ENCODE measurements at regions of chr20 and their contacts with region 1.

Region 1: GRCh38 chr20:645318-646106 is 7.5 kb downstream of the SRXN1 start:
- DNase-seq: peak; percentile 78 to 89
- H3K4me3 ChIP-seq: no peak overlapping the region
- H3K4me3 Mint-ChIP-seq: no peak overlapping the region
- H3K27ac Mint-ChIP-seq: no peak overlapping the region
- H3K4me1 ChIP-seq: no peaks in the 10 kb centered on the region
- H3K4me1 Mint-ChIP-seq: no peaks in the 10 kb centered on the region
- H3K27me3 ChIP-seq: no peaks in the 10 kb centered on the region
- H3K27me3 Mint-ChIP-seq: no peaks in the 10 kb centered on the region
- CTCF ChIP-seq: peak; percentile 95 to 97

Region 2: GRCh38 chr20:103456-103855 is 542.1 kb before region 1 on chr20:
- CTCF ChIA-PET with region 1: no interaction called
- POLR2A ChIA-PET with region 1: no interaction called
- intact Hi-C with region 1: no loop called
- DNase-seq: no peak
- H3K4me3 ChIP-seq: no peak overlapping the region
- H3K4me3 Mint-ChIP-seq: no peak overlapping the region
- H3K27ac Mint-ChIP-seq: no peak overlapping the region
- H3K4me1 ChIP-seq: no peaks in the 10 kb centered on the region
- H3K4me1 Mint-ChIP-seq: no peaks in the 10 kb centered on the region
- H3K27me3 ChIP-seq: peaks cover 1% of the 10 kb centered on the region; the same call in 1 of the 2 replicates
- H3K27me3 Mint-ChIP-seq: peaks cover 16% of the 10 kb centered on the region
- CTCF ChIP-seq: no peak

Region 3: DNA sequence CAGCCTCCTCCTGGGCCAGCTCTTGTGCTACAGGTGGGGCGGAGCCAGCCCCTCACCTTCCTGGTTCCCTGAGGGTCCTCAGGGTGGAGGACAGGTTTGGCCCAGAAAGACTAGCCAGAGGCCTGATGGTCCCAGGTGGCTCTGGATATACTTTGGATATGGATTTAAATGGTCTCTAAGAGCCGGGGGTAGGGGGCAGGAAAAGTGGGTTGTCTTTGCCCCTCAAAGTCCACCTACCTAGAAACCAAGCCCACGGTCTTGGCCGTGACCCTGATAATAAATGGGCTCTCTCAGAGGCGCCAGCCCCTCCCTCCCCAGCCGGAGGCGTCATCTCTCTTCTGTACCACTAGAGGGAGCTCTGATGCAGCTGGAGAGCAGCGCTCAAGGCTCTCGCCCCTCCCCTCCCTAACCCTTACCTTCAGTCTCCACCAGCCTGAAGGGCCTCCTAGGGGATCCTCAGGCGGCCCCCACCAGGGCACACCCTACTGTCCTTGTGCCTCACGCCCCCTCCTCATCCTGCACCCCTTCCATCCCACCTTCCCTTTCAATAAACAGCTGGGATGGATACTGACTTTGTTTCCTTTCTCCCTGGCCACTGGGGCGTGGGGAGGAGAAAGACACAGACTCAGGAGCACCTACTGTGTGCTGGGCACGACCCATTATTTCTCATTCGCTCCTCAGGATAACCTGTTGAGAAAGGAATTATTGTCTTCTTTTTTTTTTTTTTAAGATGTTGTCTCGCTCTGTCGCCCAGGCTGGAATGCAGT is 291.0 kb before region 1 on chr20:
- CTCF ChIA-PET with region 1: no interaction called
- POLR2A ChIA-PET with region 1: no interaction called
- intact Hi-C with region 1: loop called (anchors 5 kb)
- DNase-seq: peak; percentile 82 to 89
- H3K4me3 ChIP-seq: no peak overlapping the region
- H3K4me3 Mint-ChIP-seq: no peak overlapping the region
- H3K27ac Mint-ChIP-seq: peak overlapping the region; percentile 63
- H3K4me1 ChIP-seq: peaks cover 26% of the 10 kb centered on the region
- H3K4me1 Mint-ChIP-seq: peaks cover 23% of the 10 kb centered on the region
- H3K27me3 ChIP-seq: no peaks in the 10 kb centered on the region
- H3K27me3 Mint-ChIP-seq: no peaks in the 10 kb centered on the region
- CTCF ChIP-seq: peak; percentile 95 to 97

Region 4: GRCh38 chr20:561437-562231 is 83.9 kb before region 1 on chr20:
- CTCF ChIA-PET with region 1: interaction called, 46 read pairs
- POLR2A ChIA-PET with region 1: no interaction called
- intact Hi-C with region 1: loop called (anchors 1 kb)
- DNase-seq: peak; percentile 77 to 79
- H3K4me3 ChIP-seq: no peak overlapping the region
- H3K4me3 Mint-ChIP-seq: no peak overlapping the region
- H3K27ac Mint-ChIP-seq: no peak overlapping the region
- H3K4me1 ChIP-seq: no peaks in the 10 kb centered on the region; the same call in 1 of the 2 replicates
- H3K4me1 Mint-ChIP-seq: no peaks in the 10 kb centered on the region
- H3K27me3 ChIP-seq: no peaks in the 10 kb centered on the region
- H3K27me3 Mint-ChIP-seq: peaks cover 4% of the 10 kb centered on the region
- CTCF ChIP-seq: peak; percentile 96 to 97

Region 5: GRCh38 chr20:602111-602970 is 43.2 kb before region 1 on chr20:
- CTCF ChIA-PET with region 1: interaction called, 42 read pairs
- POLR2A ChIA-PET with region 1: no interaction called
- intact Hi-C with region 1: loop called (anchors 1 kb)
- DNase-seq: no peak
- H3K4me3 ChIP-seq: no peak overlapping the region
- H3K4me3 Mint-ChIP-seq: no peak overlapping the region
- H3K27ac Mint-ChIP-seq: no peak overlapping the region
- H3K4me1 ChIP-seq: peaks cover 8% of the 10 kb centered on the region
- H3K4me1 Mint-ChIP-seq: no peaks in the 10 kb centered on the region
- H3K27me3 ChIP-seq: no peaks in the 10 kb centered on the region
- H3K27me3 Mint-ChIP-seq: no peaks in the 10 kb centered on the region
- CTCF ChIP-seq: no peak

Region 6: DNA sequence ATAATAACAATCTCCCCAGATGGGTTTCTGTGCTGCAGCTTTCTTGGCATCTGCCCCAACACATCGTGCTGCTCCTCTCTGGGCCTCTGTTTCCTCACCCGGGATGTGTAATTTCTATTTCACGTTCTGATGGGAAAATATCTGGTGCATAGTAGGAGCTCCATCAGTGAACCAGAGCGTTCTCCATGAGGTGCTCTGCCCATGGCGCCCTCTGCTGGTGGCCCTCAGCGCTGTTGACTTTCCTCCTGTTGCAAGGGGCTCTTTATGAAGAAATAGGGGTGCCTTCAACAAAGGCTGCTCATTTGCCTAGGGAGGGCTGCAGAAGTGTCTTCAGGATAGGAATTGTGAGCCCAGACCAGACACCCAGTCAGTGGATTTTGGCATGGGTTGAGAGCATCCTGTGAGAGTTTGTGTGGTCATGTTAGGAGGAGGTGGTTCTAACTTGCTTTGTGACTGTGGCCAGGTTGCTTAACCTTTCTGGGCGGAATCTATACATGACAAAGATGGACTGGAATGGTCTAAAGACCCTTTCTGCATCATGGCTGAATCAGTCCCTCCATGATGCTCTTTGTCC is 22.0 kb after region 1 on chr20:
- CTCF ChIA-PET with region 1: interaction called, 10 read pairs
- POLR2A ChIA-PET with region 1: no interaction called
- intact Hi-C with region 1: no loop called
- DNase-seq: peak in 1 of 2 experiments; percentile 60
- H3K4me3 ChIP-seq: no peak overlapping the region
- H3K4me3 Mint-ChIP-seq: no peak overlapping the region
- H3K27ac Mint-ChIP-seq: no peak overlapping the region
- H3K4me1 ChIP-seq: no peaks in the 10 kb centered on the region
- H3K4me1 Mint-ChIP-seq: no peaks in the 10 kb centered on the region
- H3K27me3 ChIP-seq: no peaks in the 10 kb centered on the region
- H3K27me3 Mint-ChIP-seq: peaks cover 17% of the 10 kb centered on the region
- CTCF ChIP-seq: peak; percentile 67 to 85